ENCODE measurements at regions of chr11 and their contacts with region 1.

Region 1: DNA sequence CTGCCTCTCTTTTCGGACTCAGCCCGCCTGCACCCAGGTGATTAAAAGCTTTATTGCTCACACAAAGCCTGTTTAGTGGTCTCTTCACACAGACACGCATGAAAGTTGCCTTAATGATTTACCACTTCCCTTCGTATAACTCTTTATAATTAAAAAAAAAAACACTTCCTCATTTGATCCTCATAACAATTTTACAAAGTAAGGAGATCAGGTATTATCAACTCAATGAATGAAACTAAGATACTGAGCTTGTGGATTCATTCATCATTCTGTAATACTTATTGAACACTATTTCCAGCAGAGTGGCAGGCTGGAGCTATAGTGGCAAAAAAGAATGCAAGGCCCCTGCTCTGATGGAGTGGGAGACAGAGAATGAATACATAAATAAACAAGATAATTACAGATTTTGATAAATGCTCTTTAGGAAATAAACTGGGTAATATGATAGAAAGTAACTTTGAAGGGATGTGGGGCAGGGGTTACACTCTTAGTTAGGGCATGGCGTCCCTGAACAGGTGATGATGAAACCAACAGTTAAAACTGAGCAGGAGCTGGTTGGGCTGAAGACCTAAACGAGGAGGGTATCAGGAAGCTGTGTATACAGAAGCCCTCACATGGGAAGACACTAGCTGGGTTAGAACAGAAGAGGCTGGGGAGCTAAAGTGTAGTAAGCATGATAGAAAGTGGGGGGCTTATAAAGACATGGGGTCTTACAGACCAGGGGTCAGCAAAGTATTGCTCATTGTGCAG is 5.4 kb upstream of the CRTAM start:
- DNase-seq: peak; percentile 61 to 92 (median 86)
- H3K4me3 ChIP-seq: peak overlapping the region in 1 of 7 experiments; percentile 10
- H3K27ac ChIP-seq: no peak overlapping the region
- H3K4me1 ChIP-seq: peaks cover 3 to 31% (median 20%) of the 10 kb centered on the region in 4 experiments
- H3K27me3 ChIP-seq: no peaks in the 10 kb centered on the region

Region 2: GRCh38 chr11:122727101-122727929 is 105.6 kb before region 1 on chr11:
- CTCF ChIA-PET with region 1: no interaction called
- POLR2A ChIA-PET with region 1: no interaction called
- DNase-seq: peak in 1 of 3 donors; percentile 50
- H3K4me3 ChIP-seq: peak overlapping the region in 5 of 7 experiments; percentile 28 to 49 (median 32)
- H3K27ac ChIP-seq: peak overlapping the region in 1 of 2 experiments; percentile 3
- H3K4me1 ChIP-seq: peaks cover 16 to 59% (median 44%) of the 10 kb centered on the region in 4 experiments
- H3K27me3 ChIP-seq: no peaks in the 10 kb centered on the region

Region 3: GRCh38 chr11:122769126-122769780 is 63.6 kb before region 1 on chr11:
- CTCF ChIA-PET with region 1: no interaction called
- POLR2A ChIA-PET with region 1: no interaction called
- DNase-seq: no peak
- H3K4me3 ChIP-seq: no peak overlapping the region
- H3K27ac ChIP-seq: no peak overlapping the region
- H3K4me1 ChIP-seq: peaks cover 0 to 3% (median 0%) of the 10 kb centered on the region in 4 experiments
- H3K27me3 ChIP-seq: no peaks in the 10 kb centered on the region

Region 4: DNA sequence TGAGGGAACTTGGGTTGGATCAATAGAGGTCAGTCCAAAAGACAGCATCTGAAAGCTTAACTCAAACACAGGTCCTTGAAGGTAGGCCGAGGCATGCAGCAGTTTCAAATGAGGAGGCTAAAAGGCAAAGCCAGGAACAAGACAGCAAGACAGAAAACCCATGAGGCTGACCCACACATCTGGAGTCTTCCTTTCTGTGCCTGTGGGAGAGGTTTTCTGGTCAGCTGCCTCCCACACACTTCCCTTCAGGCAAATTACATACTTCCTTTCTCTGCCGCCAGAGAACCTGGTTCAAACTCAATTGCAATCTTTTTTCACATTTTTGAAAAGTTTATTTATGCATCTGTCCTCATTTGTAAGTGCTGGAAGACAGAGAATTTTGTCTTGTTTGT is 24.4 kb before region 1 on chr11:
- CTCF ChIA-PET with region 1: interaction called, 11 read pairs
- POLR2A ChIA-PET with region 1: no interaction called
- DNase-seq: peak in 2 of 3 donors; percentile 44 to 49
- H3K4me3 ChIP-seq: peak overlapping the region in 3 of 7 experiments; percentile 12 to 55 (median 47)
- H3K27ac ChIP-seq: peak overlapping the region; percentile 4 to 58
- H3K4me1 ChIP-seq: peaks cover 10 to 40% (median 21%) of the 10 kb centered on the region in 4 experiments
- H3K27me3 ChIP-seq: no peaks in the 10 kb centered on the region

Region 5: DNA sequence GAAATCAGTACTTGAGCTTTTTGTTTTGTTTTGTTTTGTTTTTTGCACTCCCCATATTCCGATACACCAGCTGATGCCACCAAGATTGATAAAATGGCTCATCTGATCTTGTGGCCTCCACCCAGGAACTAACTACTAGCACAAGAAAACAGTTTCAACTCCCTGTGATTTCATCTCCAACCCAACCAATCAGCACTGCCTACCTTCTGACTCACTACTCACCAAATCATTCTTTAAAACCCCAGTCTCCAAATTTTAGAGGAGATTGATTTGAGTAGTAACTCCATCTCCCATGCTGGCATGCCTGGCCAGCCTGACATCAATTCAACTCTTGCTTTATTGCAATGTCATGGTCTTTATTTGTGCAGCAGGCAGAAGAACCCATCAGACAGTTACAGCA is 10.7 kb before region 1 on chr11:
- CTCF ChIA-PET with region 1: interaction called, 11 read pairs
- POLR2A ChIA-PET with region 1: no interaction called
- DNase-seq: peak in 1 of 3 donors; percentile 53
- H3K4me3 ChIP-seq: no peak overlapping the region
- H3K27ac ChIP-seq: no peak overlapping the region
- H3K4me1 ChIP-seq: peaks cover 10 to 25% (median 14%) of the 10 kb centered on the region in 4 experiments
- H3K27me3 ChIP-seq: no peaks in the 10 kb centered on the region

Region 6: DNA sequence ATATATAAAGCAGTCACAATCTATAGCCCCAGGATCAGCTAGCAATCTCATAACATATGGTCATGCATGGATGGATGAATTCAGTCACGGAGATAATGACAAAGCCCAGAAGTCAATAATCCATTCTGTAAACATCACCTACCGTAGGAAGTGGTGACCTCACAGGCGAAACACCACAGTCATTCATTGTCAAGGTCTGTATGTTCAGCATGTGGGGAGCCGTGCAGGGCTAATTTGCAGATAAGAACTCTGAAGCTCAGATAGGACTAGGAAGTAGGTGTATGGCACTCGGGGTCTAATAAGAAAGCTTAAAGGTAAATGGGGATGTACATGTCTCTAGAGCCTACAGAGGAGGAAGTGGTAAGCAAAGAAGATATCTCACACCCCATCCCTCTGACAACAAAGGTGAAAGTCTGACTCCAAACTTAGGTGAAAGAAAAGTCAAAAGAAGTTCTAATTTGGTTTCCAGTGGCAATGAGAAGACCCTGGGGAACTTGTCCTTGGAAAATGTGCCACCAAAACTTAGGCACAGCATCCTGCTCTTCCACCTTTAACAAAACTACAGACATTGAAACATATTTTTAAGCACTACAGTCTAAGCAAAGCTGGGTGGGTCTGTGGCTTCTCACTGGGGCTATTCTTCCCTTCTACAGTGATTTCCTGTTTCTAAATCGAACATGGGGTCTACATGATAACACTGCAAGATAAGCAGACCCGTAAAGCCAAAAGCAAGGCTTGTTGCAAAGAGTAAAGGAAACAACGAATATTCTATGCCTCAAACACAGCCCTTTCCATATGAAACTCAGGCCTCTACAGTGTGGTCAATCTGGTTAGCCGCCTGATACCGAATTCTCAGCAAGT is 10.6 kb after region 1 on chr11:
- CTCF ChIA-PET with region 1: interaction called, 15 read pairs
- POLR2A ChIA-PET with region 1: no interaction called
- DNase-seq: peak in 2 of 3 donors; percentile 63 to 78
- H3K4me3 ChIP-seq: peak overlapping the region in 2 of 7 experiments; percentile 19 to 40
- H3K27ac ChIP-seq: no peak overlapping the region
- H3K4me1 ChIP-seq: peaks cover 11 to 24% (median 19%) of the 10 kb centered on the region in 4 experiments
- H3K27me3 ChIP-seq: no peaks in the 10 kb centered on the region

Region 7: GRCh38 chr11:123054301-123055065 is 221.6 kb after region 1 on chr11:
- CTCF ChIA-PET with region 1: no interaction called
- POLR2A ChIA-PET with region 1: no interaction called
- DNase-seq: peak; percentile 67 to 82 (median 80)
- H3K4me3 ChIP-seq: no peak overlapping the region
- H3K27ac ChIP-seq: no peak overlapping the region
- H3K4me1 ChIP-seq: peaks cover 2 to 19% (median 14%) of the 10 kb centered on the region in 4 experiments
- H3K27me3 ChIP-seq: no peaks in the 10 kb centered on the region

Measured in common myeloid progenitor, CD34-positive (primary cell).